Activated CD4-positive, alpha-beta T cell treated with anti-CD3 and anti-CD28 coated beads for 36 hours (primary cell): ENCODE measurements at regions of chr6 and their contacts with region 1.

Region 1: DNA sequence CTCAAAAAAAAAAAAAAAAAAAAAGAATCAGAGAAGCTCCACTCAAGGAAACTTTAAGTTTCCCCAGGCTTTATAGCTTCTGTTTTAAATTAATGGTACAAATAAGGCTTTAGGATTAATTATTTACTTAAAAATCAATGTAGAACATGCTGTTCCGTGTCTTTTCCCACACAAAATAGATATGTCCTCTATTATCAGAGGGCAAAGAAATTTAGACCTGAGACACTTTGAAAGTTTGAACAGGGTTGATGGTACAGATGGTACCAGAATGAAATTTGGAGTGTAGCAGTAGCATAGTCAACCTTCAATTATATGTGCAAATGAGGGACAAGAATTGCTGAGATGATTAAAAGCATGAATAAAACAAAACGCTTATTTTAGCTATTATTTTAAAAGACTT is 32.2 kb upstream of the REV3L start:
- DNase-seq: no peak
- ATAC-seq: no peak
- H3K4me3 Mint-ChIP-seq: no peak overlapping the region
- H3K27ac Mint-ChIP-seq: no peak overlapping the region
- H3K4me1 Mint-ChIP-seq: no peaks in the 10 kb centered on the region
- H3K27me3 Mint-ChIP-seq: no peaks in the 10 kb centered on the region

Region 2: DNA sequence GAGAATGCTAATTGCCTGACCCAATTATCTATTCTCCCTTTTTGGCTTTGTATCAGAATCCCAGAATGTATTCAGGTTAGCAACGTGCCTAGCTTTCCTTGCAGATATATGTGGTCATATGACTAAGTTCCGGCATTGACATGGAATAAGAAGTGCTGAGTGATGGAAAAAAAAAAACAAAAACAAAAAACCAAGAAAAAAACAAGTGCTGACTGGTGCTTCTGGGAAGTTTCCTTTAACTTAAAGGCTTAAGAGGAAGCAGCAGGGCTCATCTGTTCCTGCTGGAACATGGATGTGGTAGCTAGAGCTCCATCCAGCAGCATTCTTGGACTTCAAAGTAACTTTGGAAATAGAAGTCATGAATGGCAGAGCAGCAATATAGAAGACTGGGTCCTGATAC is 543.8 kb before region 1 on chr6:
- CTCF ChIA-PET with region 1: no interaction called
- POLR2A ChIA-PET with region 1: no interaction called
- intact Hi-C with region 1: no loop called
- DNase-seq: no peak
- ATAC-seq: no peak
- H3K4me3 Mint-ChIP-seq: no peak overlapping the region
- H3K27ac Mint-ChIP-seq: no peak overlapping the region
- H3K4me1 Mint-ChIP-seq: no peaks in the 10 kb centered on the region
- H3K27me3 Mint-ChIP-seq: no peaks in the 10 kb centered on the region

Region 3: GRCh38 chr6:111494951-111495635 is 20.2 kb before region 1 on chr6:
- CTCF ChIA-PET with region 1: interaction called, 3 read pairs
- POLR2A ChIA-PET with region 1: no interaction called
- intact Hi-C with region 1: loop called in 1 of 2 experiments (anchors 2 kb)
- DNase-seq: no peak
- ATAC-seq: no peak
- H3K4me3 Mint-ChIP-seq: no peak overlapping the region
- H3K27ac Mint-ChIP-seq: no peak overlapping the region
- H3K4me1 Mint-ChIP-seq: peaks cover 6% of the 10 kb centered on the region
- H3K27me3 Mint-ChIP-seq: no peaks in the 10 kb centered on the region